HCT116 (cell line): ENCODE measurements at regions of chr1 and their contacts with region 1.

Region 1: DNA sequence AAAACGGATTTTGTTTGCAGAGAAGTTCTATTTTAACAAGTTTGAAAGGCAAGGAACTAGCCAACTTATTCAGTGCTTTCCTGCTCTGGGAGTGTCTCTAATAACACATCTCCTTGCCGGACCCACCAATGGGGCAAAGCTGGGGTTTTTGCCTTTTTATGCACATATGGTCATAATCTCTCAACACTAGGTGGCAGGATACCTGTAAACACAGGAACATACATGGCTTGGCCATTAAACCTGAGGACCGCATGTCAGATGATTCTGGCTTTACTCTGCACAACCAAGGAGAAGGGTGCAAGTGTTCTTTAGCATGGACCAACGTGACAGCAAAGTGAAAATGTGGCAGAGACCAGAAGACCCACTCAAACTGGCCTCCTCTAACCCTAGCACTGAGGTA is 4.9 kb downstream of the TMEM9 start:
- DNase-seq: peak; percentile 35
- ATAC-seq: peak; percentile 44
- H3K4me3 ChIP-seq: no peak overlapping the region
- H3K27ac ChIP-seq: no peak overlapping the region
- H3K4me1 ChIP-seq: peaks cover 0 to 9% of the 10 kb centered on the region in 2 experiments; a peak in 3 of 4 replicates
- H3K27me3 ChIP-seq: no peaks in the 10 kb centered on the region
- CTCF ChIP-seq: peak; percentile 58 to 86 (median 73)
- POLR2A ChIP-seq: no peak
- RAD21 ChIP-seq: peak; percentile 66

Region 2: DNA sequence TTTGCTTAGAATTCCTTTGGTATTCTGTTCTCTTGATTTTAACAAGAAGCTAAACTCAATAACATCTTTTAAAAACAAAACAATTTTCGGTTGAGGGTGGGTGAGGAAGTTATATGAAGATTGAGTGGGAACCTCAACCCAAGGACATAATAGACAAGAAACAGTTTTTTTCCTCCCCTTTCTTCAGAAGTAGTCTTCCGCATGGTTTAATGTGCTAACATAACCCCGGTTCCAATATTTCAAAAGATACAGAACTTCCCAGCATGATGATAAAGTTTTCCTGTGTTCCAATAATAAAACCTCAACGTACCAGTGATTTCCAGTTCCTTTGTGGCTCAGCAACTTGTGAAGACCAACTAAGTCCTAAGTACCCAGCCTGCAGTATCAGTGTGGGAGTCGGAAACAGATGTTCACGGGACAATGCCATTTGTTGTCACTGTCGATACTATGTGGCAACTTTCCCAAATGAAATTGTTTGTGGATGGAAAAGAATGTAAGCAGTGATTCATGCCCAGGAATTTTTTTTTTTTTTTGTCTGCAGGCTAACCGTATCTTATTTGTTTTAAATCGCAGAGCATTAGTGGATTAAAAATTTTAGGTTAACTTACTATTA is 1073.4 kb before region 1 on chr1:
- CTCF ChIA-PET with region 1: no interaction called
- POLR2A ChIA-PET with region 1: no interaction called
- RAD21 ChIA-PET with region 1: no interaction called
- intact Hi-C with region 1: no loop called
- DNase-seq: peak; percentile 58
- ATAC-seq: peak; percentile 87
- H3K4me3 ChIP-seq: peak overlapping the region in 1 of 2 experiments; percentile 20; a peak in 1 of 4 replicates
- H3K27ac ChIP-seq: no peak overlapping the region
- H3K4me1 ChIP-seq: peaks cover 6 to 21% of the 10 kb centered on the region in 2 experiments
- H3K27me3 ChIP-seq: no peaks in the 10 kb centered on the region
- CTCF ChIP-seq: no peak
- POLR2A ChIP-seq: no peak
- RAD21 ChIP-seq: no peak

Region 3: GRCh38 chr1:201184307-201185122 is 35.1 kb after region 1 on chr1:
- CTCF ChIA-PET with region 1: interaction called, 9 read pairs
- POLR2A ChIA-PET with region 1: no interaction called
- RAD21 ChIA-PET with region 1: no interaction called
- intact Hi-C with region 1: loop called (anchors 1 kb)
- DNase-seq: peak; percentile 54
- ATAC-seq: peak; percentile 100
- H3K4me3 ChIP-seq: no peak overlapping the region
- H3K27ac ChIP-seq: no peak overlapping the region
- H3K4me1 ChIP-seq: peaks cover 4 to 10% of the 10 kb centered on the region in 2 experiments; a peak in 3 of 4 replicates
- H3K27me3 ChIP-seq: peaks cover 10% of the 10 kb centered on the region; the same call in 1 of the 2 replicates
- CTCF ChIP-seq: peak; percentile 70 to 78 (median 74)
- POLR2A ChIP-seq: no peak
- RAD21 ChIP-seq: peak; percentile 76

Region 4: GRCh38 chr1:201222125-201222524 is 72.7 kb after region 1 on chr1:
- CTCF ChIA-PET with region 1: interaction called, 4 read pairs
- POLR2A ChIA-PET with region 1: no interaction called
- RAD21 ChIA-PET with region 1: no interaction called
- intact Hi-C with region 1: loop called (anchors 2 kb)
- DNase-seq: no peak
- ATAC-seq: no peak
- H3K4me3 ChIP-seq: no peak overlapping the region
- H3K27ac ChIP-seq: no peak overlapping the region
- H3K4me1 ChIP-seq: peaks cover 0 to 7% of the 10 kb centered on the region in 2 experiments; a peak in 1 of 4 replicates
- H3K27me3 ChIP-seq: no peaks in the 10 kb centered on the region
- CTCF ChIP-seq: no peak
- POLR2A ChIP-seq: no peak
- RAD21 ChIP-seq: no peak

Region 5: GRCh38 chr1:201229771-201230635 is 80.6 kb after region 1 on chr1:
- CTCF ChIA-PET with region 1: interaction called, 14 read pairs
- POLR2A ChIA-PET with region 1: no interaction called
- RAD21 ChIA-PET with region 1: no interaction called
- intact Hi-C with region 1: no loop called
- DNase-seq: peak; percentile 15
- ATAC-seq: peak; percentile 87
- H3K4me3 ChIP-seq: no peak overlapping the region
- H3K27ac ChIP-seq: no peak overlapping the region
- H3K4me1 ChIP-seq: peaks cover 0 to 18% of the 10 kb centered on the region in 2 experiments; a peak in 2 of 4 replicates
- H3K27me3 ChIP-seq: no peaks in the 10 kb centered on the region
- CTCF ChIP-seq: peak; percentile 8 to 47 (median 41); a peak in 4 of 6 replicates
- POLR2A ChIP-seq: no peak
- RAD21 ChIP-seq: peak; percentile 60

Region 6: GRCh38 chr1:201361652-201362504 is 212.5 kb after region 1 on chr1:
- CTCF ChIA-PET with region 1: interaction called, 5 read pairs
- POLR2A ChIA-PET with region 1: no interaction called
- RAD21 ChIA-PET with region 1: no interaction called
- intact Hi-C with region 1: loop called (anchors 1 kb)
- DNase-seq: peak; percentile 32
- ATAC-seq: peak; percentile 93
- H3K4me3 ChIP-seq: no peak overlapping the region
- H3K27ac ChIP-seq: no peak overlapping the region
- H3K4me1 ChIP-seq: no peaks in the 10 kb centered on the region
- H3K27me3 ChIP-seq: peaks cover 9% of the 10 kb centered on the region; the same call in 1 of the 2 replicates
- CTCF ChIP-seq: peak; percentile 79 to 91 (median 88)
- POLR2A ChIP-seq: no peak
- RAD21 ChIP-seq: peak; percentile 99